Activated T-helper 1 cell treated with anti-CD3 and anti-CD28 coated beads, Interleukin-12 subunit alpha, Interleukin-12 subunit beta, Interleukin-2, Interleukin-4 antibody, amounts not matched to agents 30 ng/mL and 10 ng/mL and 1 ng/mL, durations not matched to agents 14 hours and 24 hours and 36 hours (primary cell): ENCODE measurements at regions of chr20 and their contacts with region 1.

Region 1: DNA sequence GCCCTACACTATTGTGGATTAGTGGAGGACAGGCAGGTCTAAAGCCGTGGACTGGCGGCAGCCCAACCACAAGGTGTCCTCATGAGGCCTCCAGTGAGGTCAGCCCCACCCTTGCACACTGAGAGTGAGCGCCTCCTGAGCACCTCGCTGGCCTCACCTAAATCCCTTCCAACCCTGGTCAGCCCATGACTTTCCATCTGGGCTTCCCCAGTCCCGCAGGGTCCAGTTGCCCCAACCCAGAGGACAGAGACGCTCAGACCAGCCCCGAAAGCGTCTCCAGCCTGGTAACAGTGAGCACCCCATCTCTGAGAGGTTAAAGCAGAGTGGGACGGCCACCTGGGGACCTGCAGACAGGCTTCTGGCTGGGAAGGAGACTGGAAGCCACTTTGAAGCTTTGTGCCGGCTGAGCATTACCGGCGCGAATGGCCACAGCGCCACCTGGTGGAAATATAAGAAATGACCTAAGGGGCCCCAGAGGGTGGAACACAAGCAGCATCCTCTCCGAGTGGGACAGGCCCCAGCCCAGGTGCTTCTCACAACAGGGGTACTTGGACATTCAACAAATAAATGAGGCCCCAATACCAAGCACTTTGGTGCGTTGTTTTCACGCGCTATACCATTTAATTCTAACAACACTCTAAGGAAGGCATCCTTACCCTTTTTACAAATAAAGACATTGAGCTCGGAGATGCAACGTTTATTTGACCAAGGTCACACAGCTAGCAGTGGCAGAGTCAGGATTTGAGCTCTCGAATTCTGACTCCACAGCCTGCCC is 65.7 kb upstream of the TOP1 start:
- DNase-seq: peak; percentile 63
- H3K4me3 Mint-ChIP-seq: no peak overlapping the region
- H3K27ac Mint-ChIP-seq: no peak overlapping the region
- H3K4me1 Mint-ChIP-seq: peaks cover 8% of the 10 kb centered on the region
- H3K27me3 Mint-ChIP-seq: peaks cover 15% of the 10 kb centered on the region

Region 2: GRCh38 chr20:39049684-39050554 is 1913.0 kb before region 1 on chr20:
- intact Hi-C with region 1: loop called (anchors 2 kb)
- DNase-seq: peak; percentile 76
- H3K4me3 Mint-ChIP-seq: peak overlapping the region; percentile 85
- H3K27ac Mint-ChIP-seq: peak overlapping the region; percentile 80
- H3K4me1 Mint-ChIP-seq: peaks cover 4% of the 10 kb centered on the region
- H3K27me3 Mint-ChIP-seq: peaks cover 5% of the 10 kb centered on the region

Region 3: DNA sequence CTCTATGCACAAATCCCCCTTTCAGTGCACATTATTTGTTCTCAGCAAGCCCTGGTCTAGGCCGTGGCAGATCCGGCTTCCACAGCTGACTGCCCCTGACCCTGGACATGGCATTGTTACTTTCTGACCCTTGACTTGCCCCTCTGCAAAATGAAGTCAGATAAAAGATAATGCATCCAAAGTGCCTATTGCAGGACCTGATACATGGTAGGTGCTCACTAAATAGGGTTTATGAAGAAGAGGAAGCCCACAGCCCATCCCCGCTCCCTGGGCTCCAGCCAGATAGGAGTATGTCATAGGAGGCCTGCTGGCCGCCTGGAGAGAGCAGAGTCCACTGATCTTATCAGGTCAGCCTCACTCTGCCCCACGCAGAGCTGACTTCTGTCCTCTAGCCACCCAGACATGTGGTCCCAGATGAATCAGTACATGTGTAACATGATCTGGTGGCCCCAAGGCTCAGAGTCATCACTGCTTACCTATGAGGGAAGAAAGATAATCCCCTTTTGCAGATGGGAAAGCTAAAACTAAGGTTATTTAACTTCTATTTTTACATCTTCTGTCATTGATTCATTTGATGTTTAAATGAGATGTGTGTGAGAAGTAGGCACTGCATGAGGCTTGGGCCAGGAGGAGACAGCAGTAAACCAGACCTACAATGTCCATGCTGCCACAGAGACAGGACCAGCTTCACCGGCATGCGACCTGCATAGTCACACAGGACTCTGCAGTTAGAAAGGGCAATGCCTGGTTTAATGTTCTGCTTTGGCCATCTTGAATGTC is 294.3 kb before region 1 on chr20:
- intact Hi-C with region 1: no loop called
- DNase-seq: no peak
- H3K4me3 Mint-ChIP-seq: no peak overlapping the region
- H3K27ac Mint-ChIP-seq: no peak overlapping the region
- H3K4me1 Mint-ChIP-seq: no peaks in the 10 kb centered on the region
- H3K27me3 Mint-ChIP-seq: no peaks in the 10 kb centered on the region

Region 4: GRCh38 chr20:40741507-40742106 is 221.3 kb before region 1 on chr20:
- intact Hi-C with region 1: loop called (anchors 1 kb)
- DNase-seq: peak; percentile 19
- H3K4me3 Mint-ChIP-seq: no peak overlapping the region
- H3K27ac Mint-ChIP-seq: no peak overlapping the region
- H3K4me1 Mint-ChIP-seq: no peaks in the 10 kb centered on the region
- H3K27me3 Mint-ChIP-seq: peaks cover 14% of the 10 kb centered on the region

Region 5: GRCh38 chr20:41028348-41029148 is 65.6 kb after region 1 on chr20 and contains the start of gene TOP1:
- intact Hi-C with region 1: loop called (anchors 1 kb)
- DNase-seq: peak; percentile 99
- H3K4me3 Mint-ChIP-seq: peak within 1 kb of the TSS; percentile 94
- H3K27ac Mint-ChIP-seq: peak within 1 kb of the TSS; percentile 94
- H3K4me1 Mint-ChIP-seq: peaks cover 49% of the 10 kb centered on the region
- H3K27me3 Mint-ChIP-seq: no peaks in the 10 kb centered on the region
- total RNA-seq, gene TOP1: 120 and 123 TPM in 2 replicates

Region 6: GRCh38 chr20:41136680-41137613 is 174.0 kb after region 1 on chr20 and contains the start of gene PLCG1:
- intact Hi-C with region 1: loop called (anchors 1 kb)
- DNase-seq: peak; percentile 83
- H3K4me3 Mint-ChIP-seq: peak within 1 kb of the TSS; percentile 95
- H3K27ac Mint-ChIP-seq: peak within 1 kb of the TSS; percentile 91
- H3K4me1 Mint-ChIP-seq: peaks cover 71% of the 10 kb centered on the region
- H3K27me3 Mint-ChIP-seq: no peaks in the 10 kb centered on the region
- total RNA-seq, gene PLCG1: 203 and 205 TPM in 2 replicates

Region 7: DNA sequence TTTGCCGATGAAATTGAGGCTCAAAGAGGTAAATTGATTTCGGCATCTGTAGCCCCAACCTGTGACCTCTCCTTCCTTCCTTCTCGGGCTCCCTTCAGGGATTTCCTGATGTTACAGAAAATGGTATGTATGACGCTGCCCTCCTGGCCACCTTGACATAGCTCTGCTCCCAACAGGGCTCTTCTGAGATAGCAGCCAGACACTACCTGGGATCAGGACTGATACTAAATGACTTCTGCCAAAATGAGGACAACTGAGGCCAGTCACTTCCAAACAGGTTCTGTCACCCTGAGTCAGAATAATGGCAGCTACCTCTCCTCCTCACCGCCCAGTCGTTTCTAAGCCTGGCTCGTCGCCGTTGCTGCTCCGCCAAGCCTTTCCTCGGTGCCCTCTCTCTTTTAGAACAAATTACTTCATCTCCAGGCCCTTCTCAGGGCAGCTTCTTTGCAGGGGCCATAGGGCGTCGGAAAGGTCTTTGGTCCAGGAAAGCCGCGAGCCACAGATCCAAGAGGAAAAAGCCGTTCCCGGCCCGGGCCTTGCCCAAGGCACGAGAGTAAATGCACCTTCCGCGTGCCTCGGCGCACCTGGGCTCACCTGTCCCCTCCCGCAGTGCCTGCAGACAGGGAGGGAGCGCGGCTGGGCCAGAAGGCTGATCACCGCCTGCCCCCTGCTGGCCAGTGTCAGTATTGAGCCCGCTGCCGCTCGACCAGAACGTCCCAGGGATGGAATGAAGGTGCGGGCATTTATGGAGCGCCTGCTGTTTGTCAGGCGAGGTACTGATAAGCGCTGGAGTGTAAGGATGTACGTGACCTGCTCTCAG is 376.8 kb after region 1 on chr20:
- intact Hi-C with region 1: loop called (anchors 1 kb)
- DNase-seq: peak; percentile 78
- H3K4me3 Mint-ChIP-seq: peak overlapping the region; percentile 86
- H3K27ac Mint-ChIP-seq: no peak overlapping the region
- H3K4me1 Mint-ChIP-seq: peaks cover 13% of the 10 kb centered on the region
- H3K27me3 Mint-ChIP-seq: peaks cover 14% of the 10 kb centered on the region